ENCODE measurements at regions of chr17 and their contacts with region 1.

Region 1: DNA sequence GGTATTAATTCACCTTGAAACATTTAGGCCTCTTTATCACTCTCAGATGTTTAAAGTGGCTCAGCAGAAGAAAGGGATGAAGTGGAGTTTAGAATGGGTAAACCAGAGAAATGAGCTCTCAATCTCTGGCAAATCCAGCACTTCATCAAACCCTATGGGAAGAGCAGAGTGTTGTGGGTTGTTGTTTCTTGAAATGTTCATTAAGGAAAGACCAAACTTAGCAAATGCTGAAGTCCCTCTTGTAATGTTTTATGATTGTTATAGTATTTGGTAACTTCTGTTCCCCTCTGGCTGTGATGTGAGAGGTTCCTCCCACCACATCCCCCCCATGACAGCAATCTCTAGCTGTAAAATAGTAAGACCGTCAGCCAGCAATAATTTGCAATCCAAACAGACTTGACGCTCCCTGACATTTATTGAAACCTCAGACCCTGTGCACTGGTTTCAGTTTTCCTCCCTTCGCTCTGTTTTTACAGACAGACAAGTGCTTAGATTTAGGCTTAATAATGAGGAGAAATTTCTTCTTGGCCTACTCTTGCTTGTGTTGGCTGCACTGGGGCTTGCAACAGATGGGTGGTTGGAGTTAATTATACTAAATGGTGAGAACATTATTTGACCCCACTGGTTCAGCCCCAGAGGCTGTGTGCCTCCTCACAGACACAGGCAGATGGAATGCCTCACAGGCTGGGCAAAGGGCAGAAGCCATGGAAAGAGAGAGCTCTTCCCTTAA is 609.4 kb upstream of the SOX9 start:
- DNase-seq: no peak
- ATAC-seq: no peak
- H3K4me3 ChIP-seq: no peak overlapping the region
- H3K4me3 Mint-ChIP-seq: no peak overlapping the region
- H3K27ac ChIP-seq: no peak overlapping the region
- H3K27ac Mint-ChIP-seq: no peak overlapping the region
- H3K4me1 ChIP-seq: no peaks in the 10 kb centered on the region
- H3K4me1 Mint-ChIP-seq: no peaks in the 10 kb centered on the region
- H3K27me3 ChIP-seq: no peaks in the 10 kb centered on the region
- H3K27me3 Mint-ChIP-seq: no peaks in the 10 kb centered on the region
- CTCF ChIP-seq: no peak

Region 2: DNA sequence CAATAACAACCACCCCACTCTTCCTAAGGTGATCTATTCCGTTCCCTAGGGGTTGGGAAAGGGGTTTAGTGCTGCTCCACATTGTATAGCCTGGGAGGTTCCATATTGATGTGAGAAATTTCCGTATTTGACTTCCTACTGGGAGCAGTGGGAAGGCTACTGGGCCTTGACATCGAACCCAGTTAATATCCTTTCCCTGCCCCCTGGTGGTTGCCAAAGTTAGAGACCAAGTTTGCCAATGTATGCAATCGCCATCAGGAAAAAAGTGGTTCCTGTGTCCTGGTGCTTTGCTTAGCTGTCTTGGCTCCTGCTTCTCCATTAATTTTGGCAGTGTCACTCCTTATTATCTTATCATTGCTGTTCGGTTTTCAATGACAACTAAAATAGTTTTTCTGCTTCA is 427.2 kb before region 1 on chr17:
- CTCF ChIA-PET with region 1: no interaction called
- POLR2A ChIA-PET with region 1: no interaction called
- intact Hi-C with region 1: loop called in 1 of 2 experiments (anchors 5 kb)
- DNase-seq: no peak
- ATAC-seq: no peak
- H3K4me3 ChIP-seq: no peak overlapping the region
- H3K4me3 Mint-ChIP-seq: no peak overlapping the region
- H3K27ac ChIP-seq: no peak overlapping the region
- H3K27ac Mint-ChIP-seq: no peak overlapping the region
- H3K4me1 ChIP-seq: no peaks in the 10 kb centered on the region
- H3K4me1 Mint-ChIP-seq: no peaks in the 10 kb centered on the region
- H3K27me3 ChIP-seq: no peaks in the 10 kb centered on the region
- H3K27me3 Mint-ChIP-seq: no peaks in the 10 kb centered on the region
- CTCF ChIP-seq: no peak

Region 3: GRCh38 chr17:71441098-71441497 is 70.3 kb before region 1 on chr17:
- CTCF ChIA-PET with region 1: no interaction called
- POLR2A ChIA-PET with region 1: no interaction called
- intact Hi-C with region 1: loop called in 1 of 2 experiments (anchors 5 kb)
- DNase-seq: no peak
- ATAC-seq: no peak
- H3K4me3 ChIP-seq: no peak overlapping the region
- H3K4me3 Mint-ChIP-seq: no peak overlapping the region
- H3K27ac ChIP-seq: no peak overlapping the region
- H3K27ac Mint-ChIP-seq: no peak overlapping the region
- H3K4me1 ChIP-seq: no peaks in the 10 kb centered on the region
- H3K4me1 Mint-ChIP-seq: no peaks in the 10 kb centered on the region
- H3K27me3 ChIP-seq: no peaks in the 10 kb centered on the region
- H3K27me3 Mint-ChIP-seq: no peaks in the 10 kb centered on the region
- CTCF ChIP-seq: no peak

Measured in CD4-positive, alpha-beta T cell (primary cell).